WTC11 (cell line): ENCODE measurements at regions of chr1 and their contacts with region 1.

Region 1: DNA sequence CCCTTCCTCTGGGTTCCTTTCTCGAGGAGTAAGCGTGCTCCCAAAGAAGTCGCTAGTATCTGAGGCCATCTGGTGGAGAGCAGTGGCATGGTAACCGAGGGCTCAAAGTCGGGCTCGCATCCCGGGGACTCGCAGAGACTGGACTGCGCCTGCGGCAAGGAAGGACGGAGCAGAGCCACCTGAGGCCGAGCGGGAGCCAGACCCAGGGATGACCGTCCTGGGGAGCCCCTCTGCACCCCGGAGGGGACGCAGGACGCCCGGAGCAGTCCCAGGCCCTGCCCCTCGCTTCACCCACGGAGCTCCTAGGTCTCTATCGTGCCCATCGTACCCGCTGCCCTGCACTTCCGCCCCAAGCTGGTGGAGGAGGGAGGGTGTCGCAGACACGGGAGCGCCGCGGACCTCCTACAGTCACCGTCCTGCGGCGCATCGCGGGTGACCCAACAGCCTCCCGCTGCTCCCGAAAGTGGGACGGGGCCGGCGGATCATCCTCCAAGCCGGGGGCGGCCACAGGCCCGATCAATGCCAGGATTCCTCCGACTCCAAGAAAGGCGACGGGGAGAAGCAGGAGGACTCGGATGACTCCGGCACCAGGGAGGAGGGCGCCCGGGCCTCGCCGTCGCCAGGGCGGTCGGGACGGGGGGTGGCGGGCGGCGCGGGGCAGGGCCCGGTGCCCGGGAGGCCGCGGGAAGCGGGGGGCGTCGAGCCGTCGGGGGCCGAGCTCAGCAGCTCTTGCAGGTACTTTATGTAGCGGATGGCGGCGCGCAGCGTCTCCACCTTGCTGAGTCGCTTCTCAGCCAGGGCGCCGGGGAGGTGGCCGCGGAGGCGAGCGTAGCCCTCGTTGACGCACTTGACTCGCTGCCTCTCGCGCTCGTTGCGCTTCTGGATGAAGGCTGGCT is 2.3 kb upstream of the CACNA1S start:
- DNase-seq: peak; percentile 95
- ATAC-seq: peak; percentile 92
- H3K4me3 Mint-ChIP-seq: peak overlapping the region; percentile 73
- H3K27ac Mint-ChIP-seq: no peak overlapping the region
- H3K4me1 Mint-ChIP-seq: peaks cover 8% of the 10 kb centered on the region
- H3K27me3 Mint-ChIP-seq: peaks cover 62% of the 10 kb centered on the region
- CTCF ChIP-seq: peak; percentile 65

Region 2: GRCh38 chr1:200488375-200489165 is 625.9 kb before region 1 on chr1:
- CTCF ChIA-PET with region 1: no interaction called
- POLR2A ChIA-PET with region 1: no interaction called
- DNase-seq: peak; percentile 54
- ATAC-seq: peak; percentile 83
- H3K4me3 Mint-ChIP-seq: peak overlapping the region; percentile 29
- H3K27ac Mint-ChIP-seq: no peak overlapping the region
- H3K4me1 Mint-ChIP-seq: peaks cover 11% of the 10 kb centered on the region
- H3K27me3 Mint-ChIP-seq: peaks cover 9% of the 10 kb centered on the region
- CTCF ChIP-seq: peak; percentile 75

Region 3: DNA sequence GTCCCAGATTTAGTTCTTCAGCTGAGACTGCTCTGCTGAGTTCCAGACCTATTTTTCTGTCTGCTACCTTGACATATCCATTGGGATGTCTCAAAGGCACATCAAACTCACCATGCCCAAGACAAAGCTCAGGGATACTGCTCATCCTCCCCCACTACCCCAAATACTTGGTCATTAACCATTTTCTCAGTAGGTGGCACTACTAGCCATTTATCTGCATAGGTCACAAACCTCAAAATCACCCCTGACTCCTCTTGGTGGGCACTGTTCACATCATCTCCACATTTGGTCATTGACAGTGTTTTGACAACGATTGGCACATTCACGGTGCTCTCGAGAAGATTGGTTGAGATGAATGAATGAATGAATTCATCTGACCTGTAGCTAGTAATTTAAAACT is 34.3 kb before region 1 on chr1:
- CTCF ChIA-PET with region 1: interaction called, 124 read pairs
- POLR2A ChIA-PET with region 1: no interaction called
- DNase-seq: no peak
- ATAC-seq: no peak
- H3K4me3 Mint-ChIP-seq: no peak overlapping the region
- H3K27ac Mint-ChIP-seq: no peak overlapping the region
- H3K4me1 Mint-ChIP-seq: no peaks in the 10 kb centered on the region; the same call in 1 of the 2 replicates
- H3K27me3 Mint-ChIP-seq: no peaks in the 10 kb centered on the region
- CTCF ChIP-seq: no peak

Region 4: DNA sequence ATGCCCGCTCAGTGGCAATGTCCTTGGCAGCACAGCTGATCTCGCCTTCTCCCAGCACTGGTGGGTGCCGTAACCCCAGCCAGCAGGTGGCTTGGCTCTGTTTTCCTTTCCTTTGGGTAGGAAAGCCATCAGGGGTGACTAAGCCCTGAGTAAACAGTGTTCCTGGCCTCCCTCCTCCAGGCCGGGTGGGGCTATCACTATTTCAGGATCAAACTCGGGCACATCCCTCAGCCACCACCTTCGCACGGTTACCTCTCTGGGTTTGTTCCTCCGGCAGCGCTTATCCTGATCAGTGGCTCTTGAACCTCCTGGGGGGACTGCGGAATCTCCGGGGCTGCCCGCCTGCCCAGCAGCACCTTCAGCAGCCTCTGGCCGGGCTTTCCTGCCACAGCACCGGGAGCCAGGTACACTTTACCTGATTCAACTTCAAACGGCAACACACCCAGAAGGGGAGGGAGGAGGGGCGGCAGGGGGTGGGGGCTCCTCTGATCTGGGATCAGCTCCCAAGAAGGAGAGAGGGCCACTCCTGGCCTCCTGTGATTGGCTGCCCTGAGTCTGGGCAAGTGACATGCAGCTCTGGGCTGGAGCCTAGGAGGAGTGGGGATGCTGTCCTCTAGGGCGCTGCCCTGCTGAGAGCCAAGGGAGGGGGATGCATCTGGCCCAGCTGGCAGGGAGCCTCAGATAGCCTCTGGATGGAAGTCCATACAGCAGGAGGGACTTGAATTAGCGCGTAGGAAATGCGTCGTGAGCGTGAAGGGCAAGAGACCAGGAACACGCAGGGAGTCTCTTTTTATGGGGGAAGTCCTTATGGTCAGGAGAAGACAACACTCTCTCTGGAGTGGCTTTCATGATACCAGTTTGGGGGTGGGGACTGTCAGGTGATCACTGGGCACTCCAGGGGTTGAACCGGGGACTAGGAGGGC is 12.6 kb after region 1 on chr1 and contains the start of gene ASCL5:
- CTCF ChIA-PET with region 1: interaction called, 43 read pairs
- POLR2A ChIA-PET with region 1: no interaction called
- DNase-seq: peak; percentile 57
- ATAC-seq: peak; percentile 92
- H3K4me3 Mint-ChIP-seq: no peak within 1 kb of the TSS
- H3K27ac Mint-ChIP-seq: no peak within 1 kb of the TSS
- H3K4me1 Mint-ChIP-seq: peaks cover 10% of the 10 kb centered on the region
- H3K27me3 Mint-ChIP-seq: peaks cover 2% of the 10 kb centered on the region; the same call in 1 of the 2 replicates
- CTCF ChIP-seq: no peak
- total RNA-seq, gene ASCL5: 0.18 to 0.53 TPM (median 0.31 TPM) in 3 replicates

Region 5: GRCh38 chr1:201302163-201302896 is 187.8 kb after region 1 on chr1:
- CTCF ChIA-PET with region 1: no interaction called
- POLR2A ChIA-PET with region 1: no interaction called
- DNase-seq: no peak
- ATAC-seq: no peak; the same call in 1 of the 2 replicates
- H3K4me3 Mint-ChIP-seq: no peak overlapping the region
- H3K27ac Mint-ChIP-seq: peak overlapping the region; percentile 31; the same call in 1 of the 2 replicates
- H3K4me1 Mint-ChIP-seq: no peaks in the 10 kb centered on the region
- H3K27me3 Mint-ChIP-seq: no peaks in the 10 kb centered on the region
- CTCF ChIP-seq: no peak